ENCODE measurements at regions of chr15 and their contacts with region 1.

Region 1: GRCh38 chr15:26325495-26325894 is 447.4 kb downstream of the GABRB3 start:
- DNase-seq: no peak
- ATAC-seq: no peak
- H3K4me3 ChIP-seq: no peak overlapping the region
- H3K27ac ChIP-seq: no peak overlapping the region
- H3K4me1 ChIP-seq: no peaks in the 10 kb centered on the region
- H3K27me3 ChIP-seq: no peaks in the 10 kb centered on the region
- CTCF ChIP-seq: no peak
- POLR2A ChIP-seq: no peak

Region 2: DNA sequence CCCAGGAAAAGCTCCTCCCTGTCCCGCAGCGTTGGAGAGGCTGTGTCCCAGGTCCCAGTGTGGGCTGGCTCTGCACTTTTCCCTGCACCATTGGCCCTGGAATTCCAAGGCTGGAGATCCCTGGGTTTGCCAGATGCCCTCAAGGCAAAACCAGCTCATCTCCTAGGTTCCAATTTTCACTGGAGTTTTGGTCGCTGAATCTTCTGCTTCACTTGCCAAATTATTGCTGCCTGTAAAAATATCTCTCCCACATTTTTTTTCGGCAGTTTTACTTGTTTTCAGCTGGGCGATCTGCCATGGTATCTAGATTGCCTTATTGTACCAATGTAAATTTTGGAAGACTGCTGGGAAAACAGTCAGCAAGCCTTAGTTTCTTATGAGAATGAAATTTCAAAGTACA is 311.5 kb before region 1 on chr15:
- intact Hi-C with region 1: no loop called
- DNase-seq: no peak
- ATAC-seq: no peak
- H3K4me3 ChIP-seq: no peak overlapping the region
- H3K27ac ChIP-seq: no peak overlapping the region
- H3K4me1 ChIP-seq: no peaks in the 10 kb centered on the region
- H3K27me3 ChIP-seq: peaks cover 0 to 17% (median 0%) of the 10 kb centered on the region in 9 donors
- CTCF ChIP-seq: no peak
- POLR2A ChIP-seq: no peak

Region 3: GRCh38 chr15:26382444-26383075 is 57.1 kb after region 1 on chr15:
- intact Hi-C with region 1: loop called in 1 of 10 experiments (anchors 10 kb)
- DNase-seq: no peak
- ATAC-seq: peak in 3 of 4 donors; percentile 53 to 69 (median 54)
- H3K4me3 ChIP-seq: no peak overlapping the region
- H3K27ac ChIP-seq: no peak overlapping the region
- H3K4me1 ChIP-seq: no peaks in the 10 kb centered on the region
- H3K27me3 ChIP-seq: no peaks in the 10 kb centered on the region
- CTCF ChIP-seq: no peak
- POLR2A ChIP-seq: no peak

Region 4: GRCh38 chr15:26461847-26462608 is 136.5 kb after region 1 on chr15:
- intact Hi-C with region 1: no loop called
- DNase-seq: no peak
- ATAC-seq: no peak
- H3K4me3 ChIP-seq: no peak overlapping the region
- H3K27ac ChIP-seq: no peak overlapping the region
- H3K4me1 ChIP-seq: no peaks in the 10 kb centered on the region
- H3K27me3 ChIP-seq: no peaks in the 10 kb centered on the region
- CTCF ChIP-seq: no peak
- POLR2A ChIP-seq: no peak

Region 5: GRCh38 chr15:26521691-26522198 is 196.2 kb after region 1 on chr15:
- intact Hi-C with region 1: loop called in 1 of 10 experiments (anchors 10 kb)
- DNase-seq: no peak
- ATAC-seq: no peak
- H3K4me3 ChIP-seq: no peak overlapping the region
- H3K27ac ChIP-seq: no peak overlapping the region
- H3K4me1 ChIP-seq: no peaks in the 10 kb centered on the region
- H3K27me3 ChIP-seq: no peaks in the 10 kb centered on the region
- CTCF ChIP-seq: no peak
- POLR2A ChIP-seq: no peak

Measured in heart left ventricle (tissue), 16 donors.